Kidney (tissue), 22 donors: ENCODE measurements at regions of chr7 and their contacts with region 1.

Region 1: GRCh38 chr7:35983626-35984025 is 169.4 kb upstream of the EEPD1 start:
- DNase-seq: no peak
- H3K4me3 ChIP-seq: no peak overlapping the region
- H3K27ac ChIP-seq: no peak overlapping the region
- H3K4me1 ChIP-seq: peaks cover 0 to 2% (median 0%) of the 10 kb centered on the region in 3 donors
- H3K27me3 ChIP-seq: no peaks in the 10 kb centered on the region
- CTCF ChIP-seq: no peak

Region 2: DNA sequence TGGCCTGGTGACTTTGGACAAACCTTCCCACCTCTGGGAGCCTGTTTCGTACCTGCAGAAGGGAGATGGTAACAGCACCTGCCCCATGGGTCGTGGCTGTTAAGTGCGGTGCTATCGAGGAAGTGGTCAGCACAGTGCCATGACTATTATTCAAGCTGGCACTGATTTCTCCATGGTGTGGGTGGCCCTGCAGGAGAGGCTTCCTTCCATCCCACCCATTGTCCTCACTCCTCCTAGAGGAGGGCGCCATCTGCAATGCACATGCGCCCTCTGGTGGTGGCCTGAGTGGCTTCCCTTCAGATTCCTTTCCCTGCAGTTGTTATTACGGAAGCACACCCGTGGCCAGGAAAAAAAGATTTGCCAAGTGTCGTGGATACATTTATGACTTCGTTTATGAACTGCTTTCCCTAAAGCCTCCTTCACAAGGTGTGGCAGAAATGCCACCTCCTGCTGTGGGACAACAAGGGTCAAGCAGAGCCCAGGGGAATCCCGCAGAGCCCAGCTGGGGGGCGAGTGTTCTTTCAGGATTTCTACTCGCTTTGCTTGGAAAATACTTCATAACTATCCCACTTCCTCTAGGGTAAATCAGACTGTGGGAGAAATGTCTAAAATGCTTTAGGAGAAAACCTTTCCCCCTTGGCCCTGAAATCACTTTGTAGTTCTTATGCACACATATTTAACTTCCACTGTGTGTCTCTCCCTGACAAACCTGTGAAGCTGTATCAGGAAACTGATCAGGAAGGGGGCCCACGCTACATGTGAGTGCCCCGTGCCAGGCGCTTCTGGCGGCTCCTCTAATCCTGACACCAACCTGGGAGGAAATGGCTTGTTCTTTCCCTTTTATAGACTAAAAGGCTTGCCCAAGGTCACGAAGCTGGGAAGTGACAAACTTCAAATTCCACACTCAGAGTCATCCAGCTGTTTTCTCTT is 308.0 kb after region 1 on chr7:
- intact Hi-C with region 1: loop called (anchors 5 kb)
- DNase-seq: peak; percentile 86 to 95 (median 90)
- H3K4me3 ChIP-seq: peak overlapping the region in 2 of 3 donors; percentile 56 to 60
- H3K27ac ChIP-seq: peak overlapping the region; percentile 71 to 89
- H3K4me1 ChIP-seq: peaks cover 0 to 13% (median 10%) of the 10 kb centered on the region in 3 donors
- H3K27me3 ChIP-seq: no peaks in the 10 kb centered on the region
- CTCF ChIP-seq: peak; percentile 99

Region 3: DNA sequence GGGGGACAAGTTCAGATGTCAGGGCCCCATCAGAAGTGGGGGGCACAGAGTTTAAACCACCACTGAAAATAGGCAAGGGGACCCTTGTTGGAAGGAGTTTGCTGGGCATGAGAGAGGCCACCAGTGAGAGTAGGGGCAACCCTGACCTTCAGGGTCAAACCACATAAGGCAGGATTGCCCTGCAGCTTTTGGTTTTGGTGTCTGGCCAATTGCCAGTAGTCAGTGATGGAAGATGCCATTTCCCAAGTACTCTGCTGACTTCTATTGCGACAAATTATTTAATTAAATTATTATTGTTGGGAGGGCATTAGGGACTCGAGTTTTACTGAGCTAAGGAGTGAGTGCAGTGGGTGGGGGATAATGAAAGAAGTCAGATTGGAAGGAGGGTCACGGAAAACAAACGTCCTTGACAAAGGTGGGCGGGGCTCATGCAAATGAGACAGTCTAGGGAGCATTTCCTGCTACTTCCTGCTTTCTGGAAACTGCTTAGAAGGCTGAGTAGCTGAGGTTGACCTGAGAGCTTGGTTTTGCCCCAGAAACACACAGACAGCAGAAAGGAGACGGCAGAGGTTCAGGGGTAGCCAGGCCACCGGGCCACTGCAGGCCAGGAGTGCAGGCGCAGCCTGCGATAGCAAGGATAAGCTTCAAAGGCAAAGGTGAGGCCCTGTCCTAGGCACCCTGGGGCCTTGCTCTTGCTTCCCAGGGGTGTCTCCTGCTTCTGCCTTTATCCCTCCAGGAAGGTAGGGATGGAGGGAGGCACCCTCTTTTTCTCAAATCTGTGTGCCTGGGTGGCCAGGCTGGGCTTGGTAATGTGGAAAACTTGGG is 331.9 kb after region 1 on chr7:
- intact Hi-C with region 1: loop called (anchors 5 kb)
- DNase-seq: peak in 1 of 5 donors; percentile 28
- H3K4me3 ChIP-seq: no peak overlapping the region
- H3K27ac ChIP-seq: no peak overlapping the region
- H3K4me1 ChIP-seq: no peaks in the 10 kb centered on the region
- H3K27me3 ChIP-seq: no peaks in the 10 kb centered on the region
- CTCF ChIP-seq: no peak